ENCODE measurements at regions of chr15 and their contacts with region 1.

Region 1: DNA sequence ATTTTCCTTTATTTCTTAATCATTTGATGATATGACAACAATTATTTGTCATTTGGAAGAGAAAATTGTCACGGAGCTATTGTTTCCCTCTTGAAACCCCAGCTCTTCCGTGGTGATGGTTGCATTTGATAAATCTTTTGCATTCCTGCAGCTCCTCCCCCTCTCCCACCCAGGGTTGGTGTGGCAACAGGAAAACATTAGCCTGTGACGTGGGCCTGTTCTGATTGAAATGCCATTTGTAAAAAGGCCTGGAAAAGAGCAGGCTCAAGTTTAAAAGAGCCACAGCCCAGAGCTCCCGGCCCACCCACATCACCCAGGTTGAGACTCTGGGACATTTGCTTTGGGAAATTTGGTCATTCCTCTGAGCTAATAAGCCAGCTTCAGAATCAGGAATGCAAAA is 282.5 kb downstream of the RPLP1 start:
- DNase-seq: no peak
- H3K4me3 ChIP-seq: no peak overlapping the region
- H3K27ac ChIP-seq: no peak overlapping the region
- H3K4me1 ChIP-seq: peaks cover 0 to 4% (median under 1%) of the 10 kb centered on the region in 4 experiments; a peak in 3 of 7 replicates
- H3K27me3 ChIP-seq: no peaks in the 10 kb centered on the region
- CTCF ChIP-seq: no peak
- EP300 ChIP-seq: 0 out of 3 replicates have a peak, but pooled peaks of 1 of the 2 experiments have one; percentile 65
- POLR2A ChIP-seq: no peak
- RAD21 ChIP-seq: no peak

Region 2: DNA sequence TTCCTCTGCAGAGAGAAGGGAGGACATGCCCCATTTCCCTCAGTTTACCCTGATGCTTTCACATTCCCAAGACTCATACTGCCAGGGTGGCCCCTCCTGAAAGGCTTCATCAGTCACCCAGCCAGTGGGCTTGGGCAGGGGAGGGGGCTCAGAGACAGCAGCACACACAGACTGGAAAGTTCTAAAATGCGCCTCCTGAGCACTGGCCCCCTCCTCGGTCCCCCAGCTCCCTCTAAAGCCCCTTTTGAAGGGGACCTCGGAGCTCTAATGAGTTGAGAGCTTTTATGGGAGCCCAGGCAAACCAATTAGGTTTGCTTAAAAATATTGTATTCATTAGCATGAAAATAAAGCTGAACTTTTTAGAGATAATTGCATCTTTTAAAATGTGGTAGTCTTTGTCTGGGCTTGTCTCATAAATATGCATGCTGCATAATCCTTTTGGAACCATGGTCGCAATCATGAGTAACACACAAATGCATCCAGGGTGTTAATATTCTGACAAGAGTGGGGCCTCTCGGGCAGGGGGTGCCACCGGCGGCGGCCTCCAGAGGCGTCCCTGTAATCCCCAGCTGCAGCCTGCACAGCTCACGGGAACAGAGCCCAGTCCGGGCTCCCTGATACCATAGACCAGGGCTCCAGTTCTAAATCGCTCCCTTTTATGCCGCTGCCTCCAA is 204.0 kb before region 1 on chr15:
- CTCF ChIA-PET with region 1: no interaction called
- POLR2A ChIA-PET with region 1: no interaction called
- DNase-seq: no peak
- H3K4me3 ChIP-seq: no peak overlapping the region
- H3K27ac ChIP-seq: no peak overlapping the region
- H3K4me1 ChIP-seq: peaks cover 6 to 17% (median 8%) of the 10 kb centered on the region in 4 experiments; a peak in 6 of 7 replicates
- H3K27me3 ChIP-seq: no peaks in the 10 kb centered on the region
- CTCF ChIP-seq: no peak
- EP300 ChIP-seq: no peak
- POLR2A ChIP-seq: no peak
- RAD21 ChIP-seq: no peak

Region 3: GRCh38 chr15:69719527-69720240 is 15.4 kb before region 1 on chr15:
- CTCF ChIA-PET with region 1: interaction called, 19 read pairs
- POLR2A ChIA-PET with region 1: interaction called, 3 read pairs
- DNase-seq: no peak
- H3K4me3 ChIP-seq: no peak overlapping the region
- H3K27ac ChIP-seq: no peak overlapping the region
- H3K4me1 ChIP-seq: peaks cover 0 to 3% (median 1%) of the 10 kb centered on the region in 4 experiments; a peak in 1 of 7 replicates
- H3K27me3 ChIP-seq: no peaks in the 10 kb centered on the region
- CTCF ChIP-seq: no peak
- EP300 ChIP-seq: no peak
- POLR2A ChIP-seq: no peak
- RAD21 ChIP-seq: no peak

Measured in H1 (cell line).